Activated naive CD8-positive, alpha-beta T cell treated with anti-CD3 and anti-CD28 coated beads, Interleukin-2, amount 10 ng/mL, durations not matched to agents 7 days and 5 days (primary cell): ENCODE measurements at regions of chr3 and their contacts with region 1.

Region 1: DNA sequence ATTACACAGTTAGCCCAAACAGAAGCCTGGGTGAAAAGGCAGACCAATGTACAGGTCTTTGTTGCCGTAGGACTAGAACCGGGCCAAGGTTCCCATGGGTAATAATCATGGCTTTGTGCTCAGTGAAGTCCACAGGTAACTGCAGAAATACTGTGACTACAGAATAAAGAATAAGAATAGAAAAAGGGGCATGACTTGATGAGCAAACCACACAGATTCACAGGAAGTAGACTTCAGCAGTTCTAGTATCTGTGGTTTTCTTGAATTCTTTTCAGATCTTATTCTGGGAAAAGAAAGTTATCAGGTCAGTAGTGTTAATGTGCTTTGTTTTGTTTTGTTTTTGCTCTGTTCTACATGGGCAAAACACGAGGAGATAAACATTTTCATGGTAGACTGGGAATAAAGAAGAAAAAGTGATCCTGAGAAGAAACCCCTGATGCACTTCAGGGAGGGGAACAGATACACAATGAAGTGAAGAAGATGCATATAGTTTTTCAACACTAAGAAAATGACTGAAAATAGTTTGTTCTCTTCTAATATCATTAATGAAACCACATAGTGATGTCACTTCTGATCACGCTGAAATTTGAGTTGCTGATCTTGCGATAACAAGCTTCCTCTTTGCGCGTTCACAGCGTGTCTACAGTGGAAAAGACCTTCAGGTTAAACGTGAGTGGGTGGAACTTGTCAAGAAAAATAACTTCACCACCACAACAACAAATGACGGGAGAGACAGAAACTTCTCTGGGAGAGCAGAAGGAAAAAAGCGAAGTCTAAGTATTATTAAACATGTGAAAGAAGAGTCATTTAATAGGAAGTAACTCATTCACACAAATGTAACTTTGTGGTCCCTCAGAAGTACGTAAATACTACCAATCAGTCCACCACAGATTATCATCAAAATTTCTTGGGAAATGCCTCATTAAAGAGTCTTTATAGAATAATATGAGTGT is 315.8 kb upstream of the SATB1 start:
- DNase-seq: no peak
- ATAC-seq: peak; percentile 48
- H3K4me3 Mint-ChIP-seq: peak overlapping the region; percentile 77
- H3K27ac Mint-ChIP-seq: peak overlapping the region; percentile 96
- H3K4me1 Mint-ChIP-seq: peaks cover 77% of the 10 kb centered on the region
- H3K27me3 Mint-ChIP-seq: no peaks in the 10 kb centered on the region

Region 2: GRCh38 chr3:18438586-18438985 is 302.3 kb before region 1 on chr3:
- POLR2A ChIA-PET with region 1: interaction called, 14 read pairs
- DNase-seq: peak; percentile 72
- ATAC-seq: peak; percentile 83
- H3K4me3 Mint-ChIP-seq: peak overlapping the region; percentile 89
- H3K27ac Mint-ChIP-seq: peak overlapping the region; percentile 93
- H3K4me1 Mint-ChIP-seq: peaks cover 43% of the 10 kb centered on the region
- H3K27me3 Mint-ChIP-seq: no peaks in the 10 kb centered on the region

Region 3: GRCh38 chr3:18669374-18669773 is 71.5 kb before region 1 on chr3:
- POLR2A ChIA-PET with region 1: no interaction called
- DNase-seq: no peak
- ATAC-seq: no peak
- H3K4me3 Mint-ChIP-seq: no peak overlapping the region
- H3K27ac Mint-ChIP-seq: no peak overlapping the region
- H3K4me1 Mint-ChIP-seq: peaks cover 13% of the 10 kb centered on the region
- H3K27me3 Mint-ChIP-seq: no peaks in the 10 kb centered on the region

Region 4: GRCh38 chr3:18681818-18682345 is 59.0 kb before region 1 on chr3:
- POLR2A ChIA-PET with region 1: no interaction called
- DNase-seq: no peak
- ATAC-seq: no peak
- H3K4me3 Mint-ChIP-seq: peak overlapping the region; percentile 1
- H3K27ac Mint-ChIP-seq: peak overlapping the region; percentile 28
- H3K4me1 Mint-ChIP-seq: peaks cover 52% of the 10 kb centered on the region
- H3K27me3 Mint-ChIP-seq: no peaks in the 10 kb centered on the region

Region 5: DNA sequence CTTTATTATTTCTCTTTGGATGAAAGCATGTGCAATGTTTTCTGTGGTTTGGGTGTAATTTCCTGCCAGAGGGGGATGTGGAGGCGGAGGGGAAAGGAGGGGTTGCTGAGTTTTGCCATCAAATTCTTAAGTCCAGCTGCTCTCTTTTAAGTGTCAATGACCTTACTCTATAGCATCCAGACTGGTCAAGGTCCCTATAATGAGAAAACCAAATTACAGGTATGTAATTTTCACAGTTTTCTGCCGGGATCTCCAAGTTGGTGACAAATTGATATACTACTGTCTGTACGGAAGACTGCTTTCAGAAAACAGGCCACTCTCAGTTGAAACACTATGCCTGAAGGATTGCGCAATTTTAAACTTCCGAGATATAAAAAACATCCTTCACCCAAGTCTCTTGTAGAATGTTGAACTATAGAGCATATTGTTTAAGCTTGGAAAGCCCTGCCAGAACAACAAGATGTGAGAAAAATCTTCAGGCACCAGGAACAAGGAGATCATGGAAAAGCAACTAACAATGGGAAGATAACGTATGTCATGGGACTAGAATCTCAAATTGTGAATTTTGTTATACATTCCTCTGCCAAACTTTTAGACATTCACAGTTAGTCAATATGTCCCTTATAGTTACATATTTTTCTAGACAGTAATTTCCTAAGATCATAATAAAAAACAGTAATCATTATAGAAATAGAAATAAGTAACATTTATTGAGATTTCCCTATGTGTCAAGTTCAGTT is 15.1 kb before region 1 on chr3:
- POLR2A ChIA-PET with region 1: interaction called, 32 read pairs
- DNase-seq: no peak
- ATAC-seq: peak; percentile 66
- H3K4me3 Mint-ChIP-seq: peak overlapping the region; percentile 90
- H3K27ac Mint-ChIP-seq: peak overlapping the region; percentile 97
- H3K4me1 Mint-ChIP-seq: peaks cover 67% of the 10 kb centered on the region
- H3K27me3 Mint-ChIP-seq: no peaks in the 10 kb centered on the region

Region 6: DNA sequence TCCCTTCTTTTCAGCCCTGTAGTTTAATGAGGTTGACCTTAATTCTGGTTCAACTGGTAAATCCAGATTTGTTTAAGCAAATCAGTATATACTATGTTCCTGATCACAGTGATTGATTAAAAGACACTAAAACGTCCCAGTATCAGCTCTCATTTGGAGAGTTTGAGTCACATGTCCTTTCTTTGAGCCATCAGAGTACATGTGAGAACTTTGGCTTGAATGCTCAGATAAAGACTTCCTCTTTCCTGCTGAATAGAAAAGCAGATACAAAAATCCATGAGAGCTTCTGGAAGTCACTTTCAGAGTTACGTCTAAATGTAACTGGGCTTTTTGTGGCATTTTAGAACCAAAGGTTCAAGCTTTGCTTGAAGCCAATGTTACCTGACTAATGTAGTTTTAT is 26.1 kb after region 1 on chr3:
- POLR2A ChIA-PET with region 1: no interaction called
- DNase-seq: no peak
- ATAC-seq: no peak
- H3K4me3 Mint-ChIP-seq: no peak overlapping the region
- H3K27ac Mint-ChIP-seq: no peak overlapping the region
- H3K4me1 Mint-ChIP-seq: peaks cover 15% of the 10 kb centered on the region
- H3K27me3 Mint-ChIP-seq: no peaks in the 10 kb centered on the region

Region 7: DNA sequence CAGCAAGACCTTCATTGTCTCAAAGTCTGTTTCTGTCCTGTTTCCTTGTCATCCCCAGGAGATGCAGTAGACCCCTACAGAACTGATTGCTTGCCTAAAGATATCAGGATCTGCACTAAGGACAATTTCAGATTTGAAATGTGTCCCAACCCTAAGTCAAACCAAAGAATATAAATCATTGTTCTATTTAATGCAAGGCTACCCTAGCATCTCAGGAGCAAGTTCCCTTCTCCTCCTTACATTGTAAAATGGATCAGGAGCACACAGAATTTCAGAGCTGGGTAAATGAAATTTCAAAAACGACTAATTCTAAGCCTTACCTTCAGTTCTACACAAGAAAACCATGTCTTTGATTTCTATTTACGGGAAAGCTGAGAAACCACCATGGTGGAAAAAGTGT is 46.5 kb after region 1 on chr3:
- POLR2A ChIA-PET with region 1: no interaction called
- DNase-seq: no peak
- ATAC-seq: no peak
- H3K4me3 Mint-ChIP-seq: no peak overlapping the region
- H3K27ac Mint-ChIP-seq: no peak overlapping the region
- H3K4me1 Mint-ChIP-seq: peaks cover 2% of the 10 kb centered on the region
- H3K27me3 Mint-ChIP-seq: no peaks in the 10 kb centered on the region